ENCODE measurements at regions of chr9 and their contacts with region 1.

Region 1: DNA sequence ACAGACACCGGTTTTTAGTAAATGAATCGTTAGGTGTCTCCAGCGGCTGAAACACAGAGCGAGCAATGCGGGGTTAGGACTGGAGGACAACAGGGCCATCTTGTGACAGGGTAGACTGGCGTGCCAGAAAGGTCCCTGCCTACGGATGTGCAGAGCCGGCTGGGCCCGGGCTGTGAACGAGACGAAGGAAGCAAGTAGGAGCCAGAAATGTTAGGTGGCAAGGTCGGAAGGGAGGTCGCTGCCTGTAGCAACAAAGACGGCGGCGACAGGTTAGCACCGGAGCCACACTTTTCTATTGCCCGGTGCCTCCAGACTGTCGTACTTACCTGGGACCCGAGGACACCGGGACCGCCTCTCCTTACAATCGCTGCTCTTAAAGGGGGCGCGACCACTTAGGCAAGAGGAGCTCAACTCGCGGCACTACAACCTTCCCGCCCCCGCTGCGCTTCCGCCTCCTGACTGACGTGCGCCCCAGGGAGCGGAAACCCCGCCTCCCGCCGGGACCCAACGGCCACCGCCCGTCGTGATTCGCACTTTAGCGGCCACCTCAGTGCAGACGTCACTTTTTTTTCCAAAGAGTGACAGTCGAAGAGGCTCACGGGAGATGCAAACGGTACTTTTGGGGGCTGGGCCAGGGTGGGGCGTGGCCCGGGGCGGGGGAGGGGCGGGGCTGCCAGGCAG is at the start of gene INIP:
- DNase-seq: peak; percentile 95
- H3K4me3 ChIP-seq: peak within 1 kb of the TSS; percentile 63 to 74
- H3K27ac ChIP-seq: peak within 1 kb of the TSS; percentile 85 to 87
- H3K4me1 ChIP-seq: no peaks in the 10 kb centered on the region
- H3K27me3 ChIP-seq: no peaks in the 10 kb centered on the region
- CTCF ChIP-seq: peak in 3 of 4 experiments; percentile 13 to 29 (median 23)
- POLR2A ChIP-seq: peak; percentile 86
- total RNA-seq, gene INIP: 21.0 to 36.6 TPM

Region 2: GRCh38 chr9:111957856-111958652 is 759.7 kb before region 1 on chr9:
- intact Hi-C with region 1: no loop called
- DNase-seq: no peak
- H3K4me3 ChIP-seq: no peak overlapping the region
- H3K27ac ChIP-seq: no peak overlapping the region
- H3K4me1 ChIP-seq: no peaks in the 10 kb centered on the region
- H3K27me3 ChIP-seq: no peaks in the 10 kb centered on the region
- CTCF ChIP-seq: no peak
- POLR2A ChIP-seq: no peak

Region 3: DNA sequence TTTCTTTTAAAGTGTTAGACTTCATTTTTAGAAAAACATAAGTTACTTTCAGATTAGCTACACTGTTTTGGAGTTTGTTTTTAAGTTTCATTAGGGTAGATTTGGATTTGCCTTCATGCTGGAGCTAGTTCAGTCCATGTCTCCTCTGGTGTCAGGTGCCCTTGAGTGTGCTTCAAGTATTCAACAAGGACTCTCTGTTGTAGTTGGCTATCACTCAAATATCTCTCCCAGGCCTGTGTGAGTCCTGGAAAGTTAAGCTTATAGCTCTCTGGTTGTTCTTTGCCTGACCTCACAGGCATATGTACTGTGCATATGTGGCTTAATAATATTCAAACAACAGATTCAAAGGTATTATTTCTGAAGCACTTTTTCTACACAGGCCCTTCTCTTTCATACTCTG is 429.8 kb before region 1 on chr9:
- intact Hi-C with region 1: no loop called
- DNase-seq: no peak
- H3K4me3 ChIP-seq: no peak overlapping the region
- H3K27ac ChIP-seq: no peak overlapping the region
- H3K4me1 ChIP-seq: no peaks in the 10 kb centered on the region
- H3K27me3 ChIP-seq: no peaks in the 10 kb centered on the region
- CTCF ChIP-seq: no peak
- POLR2A ChIP-seq: no peak

Region 4: GRCh38 chr9:112486221-112487007 is 231.4 kb before region 1 on chr9 and contains the start of gene KIAA1958:
- intact Hi-C with region 1: loop called (anchors 10 kb)
- DNase-seq: peak; percentile 82
- H3K4me3 ChIP-seq: peak within 1 kb of the TSS; percentile 83 to 97
- H3K27ac ChIP-seq: peak within 1 kb of the TSS; percentile 80 to 82
- H3K4me1 ChIP-seq: no peaks in the 10 kb centered on the region
- H3K27me3 ChIP-seq: no peaks in the 10 kb centered on the region
- CTCF ChIP-seq: no peak
- POLR2A ChIP-seq: peak; percentile 57
- total RNA-seq, gene KIAA1958: 7.0 to 42.8 TPM

Region 5: DNA sequence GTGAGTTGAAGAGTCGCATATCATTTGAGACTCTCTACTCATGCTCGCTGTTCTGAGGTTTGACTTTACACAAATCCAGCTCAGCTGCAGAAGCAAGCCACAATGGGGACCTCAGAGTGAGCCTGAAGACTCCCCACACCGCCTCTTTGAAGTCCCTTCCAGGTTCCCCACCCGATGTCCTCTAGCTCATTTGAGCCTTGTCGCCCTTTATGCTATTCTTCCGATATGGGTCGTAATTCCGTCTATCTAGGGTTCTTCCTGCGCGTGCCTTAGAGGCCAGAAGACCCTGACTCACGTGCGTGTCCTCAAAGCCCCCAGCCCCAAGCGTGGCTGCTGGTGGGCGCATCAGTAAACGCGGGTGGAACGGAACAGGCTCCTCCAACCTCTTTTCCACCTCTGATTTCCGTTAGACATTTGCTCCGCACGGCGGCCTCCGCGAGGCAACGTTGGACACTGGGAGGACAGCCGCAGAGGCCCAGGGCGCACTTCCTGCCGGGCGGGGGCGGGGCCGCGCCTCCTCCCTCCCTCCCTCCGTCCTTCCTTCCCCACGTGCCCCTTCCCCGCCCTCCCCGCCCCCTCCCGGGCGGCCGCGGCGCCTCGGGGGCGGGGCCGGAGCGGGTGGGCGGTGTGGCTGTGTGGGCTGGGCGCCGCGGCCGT is 32.4 kb after region 1 on chr9 and contains the start of gene SNX30:
- intact Hi-C with region 1: loop called (anchors 5 kb)
- DNase-seq: peak; percentile 85
- H3K4me3 ChIP-seq: peak within 1 kb of the TSS; percentile 57 to 97
- H3K27ac ChIP-seq: peak within 1 kb of the TSS; percentile 75 to 82
- H3K4me1 ChIP-seq: no peaks in the 10 kb centered on the region
- H3K27me3 ChIP-seq: no peaks in the 10 kb centered on the region
- CTCF ChIP-seq: peak in 2 of 4 experiments; percentile 13 to 15
- POLR2A ChIP-seq: peak; percentile 61
- total RNA-seq, gene SNX30: 6.3 to 38.7 TPM

Region 6: DNA sequence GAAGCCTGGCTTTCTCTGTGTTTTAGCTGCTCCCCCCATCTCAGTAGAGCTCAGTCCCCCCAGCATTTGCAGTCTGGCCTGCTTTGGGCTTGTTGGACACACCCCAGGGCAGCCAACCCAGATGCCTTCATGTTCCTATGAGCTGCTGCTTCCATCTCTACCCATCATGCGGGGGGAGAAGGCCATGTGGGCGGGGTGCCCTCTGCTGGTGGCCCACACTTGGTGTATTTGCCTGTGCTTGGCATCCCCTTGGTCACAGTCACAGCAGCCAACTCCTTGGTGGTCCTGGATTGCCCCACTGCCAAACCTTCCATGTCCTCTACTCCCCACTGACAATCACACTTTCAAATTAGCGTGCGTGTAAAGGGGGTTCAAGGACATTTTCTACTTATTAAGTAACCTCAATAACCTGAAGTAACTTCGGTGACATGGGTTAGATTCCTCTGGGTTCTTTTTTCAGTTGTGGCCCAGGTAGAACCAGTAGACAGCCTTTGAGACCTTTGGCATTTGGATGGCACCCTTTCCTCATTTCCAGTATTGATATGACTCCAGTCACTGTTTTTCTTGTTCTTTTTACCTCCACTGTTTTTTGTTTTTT is 75.5 kb after region 1 on chr9:
- intact Hi-C with region 1: loop called (anchors 5 kb)
- DNase-seq: peak; percentile 26
- H3K4me3 ChIP-seq: no peak overlapping the region
- H3K27ac ChIP-seq: no peak overlapping the region
- H3K4me1 ChIP-seq: no peaks in the 10 kb centered on the region
- H3K27me3 ChIP-seq: no peaks in the 10 kb centered on the region
- CTCF ChIP-seq: peak in 3 of 4 experiments; percentile 29 to 58 (median 35)
- POLR2A ChIP-seq: no peak

Region 7: GRCh38 chr9:112819635-112820496 is 102.1 kb after region 1 on chr9:
- intact Hi-C with region 1: no loop called
- DNase-seq: peak; percentile 28
- H3K4me3 ChIP-seq: no peak overlapping the region
- H3K27ac ChIP-seq: no peak overlapping the region
- H3K4me1 ChIP-seq: no peaks in the 10 kb centered on the region
- H3K27me3 ChIP-seq: no peaks in the 10 kb centered on the region
- CTCF ChIP-seq: peak in 3 of 4 experiments; percentile 59 to 67 (median 64)
- POLR2A ChIP-seq: no peak